Ascending aorta (tissue), 2 donors: ENCODE measurements at regions of chr16 and their contacts with region 1.

Region 1: GRCh38 chr16:31713071-31713944 is 160.3 kb upstream of the ZNF267 start:
- DNase-seq: peak; percentile 80 to 97
- H3K4me3 ChIP-seq: peak overlapping the region; percentile 82 to 92
- H3K27ac ChIP-seq: peak overlapping the region; percentile 94
- H3K4me1 ChIP-seq: peaks cover 4 to 11% of the 10 kb centered on the region in 2 donors
- H3K27me3 ChIP-seq: no peaks in the 10 kb centered on the region
- CTCF ChIP-seq: no peak

Region 2: GRCh38 chr16:31472709-31473203 is 240.6 kb before region 1 on chr16:
- intact Hi-C with region 1: loop called (anchors 10 kb)
- DNase-seq: peak; percentile 78 to 97
- H3K4me3 ChIP-seq: peak overlapping the region; percentile 89 to 91
- H3K27ac ChIP-seq: peak overlapping the region; percentile 96 to 100
- H3K4me1 ChIP-seq: peaks cover 0 to 26% of the 10 kb centered on the region in 2 donors
- H3K27me3 ChIP-seq: no peaks in the 10 kb centered on the region
- CTCF ChIP-seq: peak; percentile 87 to 93 (median 88)

Region 3: DNA sequence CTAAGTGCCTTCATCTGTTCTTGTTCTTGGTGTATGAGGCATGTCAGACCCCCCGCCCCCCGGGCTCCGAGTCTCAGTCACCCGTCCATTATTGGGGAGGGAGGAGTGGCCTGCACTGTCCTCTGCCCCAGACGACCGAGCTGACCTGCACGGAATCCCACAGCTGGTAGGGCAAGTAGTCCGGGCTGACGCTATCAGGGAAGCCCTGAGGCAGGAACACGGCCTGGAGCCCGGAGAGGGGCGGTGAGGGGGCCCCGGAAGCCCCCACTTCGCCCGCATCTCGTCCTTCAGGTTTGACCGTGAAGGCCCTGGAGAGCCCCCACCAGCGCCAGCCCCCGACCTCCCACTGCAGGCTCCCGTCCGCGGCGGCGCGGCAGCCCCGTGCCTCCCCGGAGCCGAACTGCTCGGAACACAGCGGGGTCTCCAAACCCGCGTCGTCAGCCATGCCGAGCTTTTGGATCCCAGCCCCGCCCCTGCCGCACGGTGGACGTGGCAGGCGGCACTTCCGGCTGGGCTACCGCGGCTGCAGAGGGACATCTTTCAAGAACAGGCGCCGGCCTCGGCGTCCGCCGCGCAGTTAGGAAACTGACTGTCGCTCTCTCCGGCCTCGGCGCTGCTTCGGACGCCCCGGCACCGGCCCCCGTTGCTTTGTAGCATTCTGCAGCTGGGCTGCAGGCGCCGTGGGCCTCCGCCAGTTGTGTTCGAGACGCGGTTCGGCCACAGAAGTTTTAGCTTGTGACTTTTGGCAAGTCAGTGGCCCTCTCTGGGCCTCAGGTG is 205.2 kb before region 1 on chr16 and contains the start of gene RUSF1:
- intact Hi-C with region 1: loop called (anchors 5 kb)
- DNase-seq: peak; percentile 67 to 96
- H3K4me3 ChIP-seq: peak within 1 kb of the TSS; percentile 95 to 97
- H3K27ac ChIP-seq: peak within 1 kb of the TSS; percentile 96 to 97
- H3K4me1 ChIP-seq: peaks cover 5 to 24% of the 10 kb centered on the region in 2 donors
- H3K27me3 ChIP-seq: no peaks in the 10 kb centered on the region
- CTCF ChIP-seq: no peak
- total RNA-seq, gene RUSF1: 80.9 TPM

Region 4: GRCh38 chr16:31734265-31734664 is 21.0 kb after region 1 on chr16:
- intact Hi-C with region 1: no loop called
- DNase-seq: no peak
- H3K4me3 ChIP-seq: no peak overlapping the region
- H3K27ac ChIP-seq: no peak overlapping the region
- H3K4me1 ChIP-seq: no peaks in the 10 kb centered on the region
- H3K27me3 ChIP-seq: no peaks in the 10 kb centered on the region
- CTCF ChIP-seq: no peak